Activated naive CD4-positive, alpha-beta T cell treated with anti-CD3 and anti-CD28 coated beads for 36 hours (primary cell): ENCODE measurements at regions of chr12 and their contacts with region 1.

Region 1: DNA sequence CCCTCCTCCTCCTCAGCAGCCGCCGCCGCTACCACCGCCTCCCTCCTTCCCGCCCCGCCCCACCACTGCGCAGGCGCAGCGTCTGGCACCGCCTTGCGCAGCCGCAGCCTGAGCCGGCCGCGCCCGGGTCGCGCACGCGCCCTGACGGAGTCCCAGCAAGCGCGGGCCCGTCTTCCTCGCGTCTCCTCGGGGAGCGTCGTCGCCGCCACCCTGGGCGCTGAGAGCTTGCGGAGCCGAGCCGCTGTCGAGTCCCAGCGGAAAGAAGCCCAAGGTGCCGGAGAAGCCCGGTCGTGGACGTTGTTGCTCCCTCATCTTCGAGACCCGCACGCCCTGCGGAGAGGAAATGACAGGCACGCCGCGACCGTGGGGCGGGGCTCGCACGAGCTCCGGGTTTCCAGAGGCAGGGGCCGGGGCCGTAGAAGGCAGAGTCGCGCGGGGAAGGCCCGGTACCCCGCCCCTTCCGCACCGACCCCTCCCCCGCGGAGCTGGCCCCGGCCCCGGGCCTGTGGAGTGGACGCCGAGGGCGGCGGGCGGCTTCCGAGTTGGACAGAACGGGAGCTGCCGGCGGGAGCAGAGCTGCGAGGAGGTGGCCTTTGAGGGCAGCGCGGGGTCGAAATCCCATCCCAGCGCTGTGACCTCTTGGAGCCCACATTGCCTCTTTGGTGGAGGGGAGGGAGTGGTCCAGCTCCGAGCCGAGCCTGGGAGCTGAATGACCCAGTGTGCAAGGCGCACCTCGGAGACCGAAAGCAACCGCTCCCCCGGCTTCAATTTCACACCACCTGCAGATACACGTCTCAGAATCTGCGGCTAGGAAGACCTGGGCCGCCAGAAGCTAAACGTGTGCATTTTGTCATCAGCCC is 469 bp upstream of the RAB35 start:
- DNase-seq: peak; percentile 98
- H3K4me3 Mint-ChIP-seq: peak overlapping the region; percentile 81
- H3K27ac Mint-ChIP-seq: peak overlapping the region; percentile 85
- H3K4me1 Mint-ChIP-seq: peaks cover 72% of the 10 kb centered on the region
- H3K27me3 Mint-ChIP-seq: no peaks in the 10 kb centered on the region

Region 2: GRCh38 chr12:119673634-119674033 is 443.4 kb before region 1 on chr12:
- CTCF ChIA-PET with region 1: no interaction called
- intact Hi-C with region 1: loop called (anchors 2 kb)
- DNase-seq: peak; percentile 45
- H3K4me3 Mint-ChIP-seq: no peak overlapping the region
- H3K27ac Mint-ChIP-seq: peak overlapping the region; percentile 93
- H3K4me1 Mint-ChIP-seq: peaks cover 47% of the 10 kb centered on the region
- H3K27me3 Mint-ChIP-seq: no peaks in the 10 kb centered on the region

Region 3: DNA sequence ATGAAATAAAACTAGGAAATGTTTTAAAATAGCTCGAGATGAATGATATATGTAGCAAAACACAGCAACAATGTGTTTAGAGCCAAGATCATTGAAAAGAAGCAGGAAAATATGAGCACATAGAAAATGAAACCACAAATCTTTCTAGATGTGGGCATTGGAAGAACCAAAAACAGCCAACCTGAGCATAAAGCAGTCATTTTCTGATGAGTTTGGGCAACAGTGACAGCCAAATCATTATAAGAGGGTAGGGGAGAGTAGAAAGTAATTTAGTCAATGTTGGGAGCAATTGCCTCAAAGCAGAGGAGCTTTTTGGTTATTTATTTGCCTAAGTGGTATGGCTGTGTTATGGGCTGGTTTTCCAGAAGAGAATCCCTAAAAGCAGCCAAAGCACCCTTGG is 136.8 kb before region 1 on chr12:
- CTCF ChIA-PET with region 1: no interaction called
- intact Hi-C with region 1: loop called (anchors 1 kb)
- DNase-seq: peak; percentile 43
- H3K4me3 Mint-ChIP-seq: peak overlapping the region; percentile 54
- H3K27ac Mint-ChIP-seq: peak overlapping the region; percentile 84
- H3K4me1 Mint-ChIP-seq: peaks cover 17% of the 10 kb centered on the region
- H3K27me3 Mint-ChIP-seq: no peaks in the 10 kb centered on the region

Region 4: DNA sequence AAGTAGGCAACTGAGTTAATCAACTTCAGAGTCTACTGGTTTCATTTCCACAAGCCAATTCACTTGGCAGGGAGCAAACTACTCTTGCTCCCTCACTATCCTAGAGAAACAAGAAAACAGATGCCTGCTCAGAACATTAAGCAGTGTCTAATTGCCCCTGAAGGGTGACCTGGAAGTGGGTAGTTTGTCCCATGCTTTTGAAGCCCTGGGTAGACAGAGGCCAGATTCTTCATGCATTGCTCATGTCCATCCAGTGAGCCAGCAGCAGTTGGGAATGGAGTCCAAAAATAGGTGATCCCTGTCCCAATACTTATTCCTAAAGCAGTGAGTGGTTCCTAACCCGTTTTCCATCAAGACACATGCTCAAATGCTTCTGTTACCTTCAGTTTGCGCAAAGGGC is 79.2 kb before region 1 on chr12:
- CTCF ChIA-PET with region 1: no interaction called
- intact Hi-C with region 1: no loop called
- DNase-seq: no peak
- H3K4me3 Mint-ChIP-seq: no peak overlapping the region
- H3K27ac Mint-ChIP-seq: no peak overlapping the region
- H3K4me1 Mint-ChIP-seq: peaks cover 32% of the 10 kb centered on the region
- H3K27me3 Mint-ChIP-seq: no peaks in the 10 kb centered on the region

Region 5: GRCh38 chr12:120086801-120087621 is 30.0 kb before region 1 on chr12:
- CTCF ChIA-PET with region 1: interaction called, 4 read pairs
- intact Hi-C with region 1: loop called (anchors 1 kb)
- DNase-seq: peak; percentile 100
- H3K4me3 Mint-ChIP-seq: peak overlapping the region; percentile 63
- H3K27ac Mint-ChIP-seq: peak overlapping the region; percentile 85
- H3K4me1 Mint-ChIP-seq: peaks cover 41% of the 10 kb centered on the region
- H3K27me3 Mint-ChIP-seq: no peaks in the 10 kb centered on the region

Region 6: DNA sequence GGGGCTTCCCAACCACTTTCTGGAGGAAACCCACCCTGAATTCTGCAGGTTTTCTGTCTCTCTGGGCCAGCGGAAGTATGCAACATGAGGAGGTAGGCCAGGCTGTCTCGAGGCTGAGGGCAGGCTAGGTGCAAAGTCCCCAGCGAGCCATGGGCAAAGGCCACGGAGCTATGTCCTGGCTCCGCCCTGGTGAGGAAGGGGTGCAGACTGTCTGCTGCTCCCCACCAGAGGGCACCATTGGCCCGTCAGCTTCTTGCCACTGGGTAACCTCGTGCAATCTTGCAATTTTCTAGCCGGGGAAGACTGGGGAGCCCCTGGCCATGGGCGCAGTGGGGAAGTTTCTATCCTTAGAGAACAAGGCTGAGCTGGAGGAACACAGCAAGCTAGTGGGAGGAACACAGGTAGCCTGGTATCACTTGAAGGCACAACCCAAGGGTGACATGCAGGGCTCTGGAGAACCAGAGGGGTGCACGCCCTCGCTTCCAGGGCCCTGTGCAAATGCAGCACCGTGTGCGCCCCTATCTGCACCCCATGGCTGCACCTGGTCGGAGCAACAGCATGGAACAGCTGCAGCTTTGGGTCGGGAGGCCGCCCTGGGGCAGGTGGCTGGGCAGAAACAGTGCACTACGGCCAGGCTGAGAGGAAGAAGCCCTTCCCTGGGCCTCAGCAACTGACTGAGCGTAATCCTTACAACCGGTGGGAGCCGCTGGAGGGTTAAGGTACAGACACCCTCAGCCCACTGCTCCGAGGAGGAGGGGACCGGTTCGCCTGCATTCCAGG is 111.5 kb after region 1 on chr12:
- CTCF ChIA-PET with region 1: no interaction called
- intact Hi-C with region 1: loop called (anchors 1 kb)
- DNase-seq: peak; percentile 96
- H3K4me3 Mint-ChIP-seq: peak overlapping the region; percentile 49
- H3K27ac Mint-ChIP-seq: peak overlapping the region; percentile 84
- H3K4me1 Mint-ChIP-seq: peaks cover 88% of the 10 kb centered on the region
- H3K27me3 Mint-ChIP-seq: no peaks in the 10 kb centered on the region

Region 7: DNA sequence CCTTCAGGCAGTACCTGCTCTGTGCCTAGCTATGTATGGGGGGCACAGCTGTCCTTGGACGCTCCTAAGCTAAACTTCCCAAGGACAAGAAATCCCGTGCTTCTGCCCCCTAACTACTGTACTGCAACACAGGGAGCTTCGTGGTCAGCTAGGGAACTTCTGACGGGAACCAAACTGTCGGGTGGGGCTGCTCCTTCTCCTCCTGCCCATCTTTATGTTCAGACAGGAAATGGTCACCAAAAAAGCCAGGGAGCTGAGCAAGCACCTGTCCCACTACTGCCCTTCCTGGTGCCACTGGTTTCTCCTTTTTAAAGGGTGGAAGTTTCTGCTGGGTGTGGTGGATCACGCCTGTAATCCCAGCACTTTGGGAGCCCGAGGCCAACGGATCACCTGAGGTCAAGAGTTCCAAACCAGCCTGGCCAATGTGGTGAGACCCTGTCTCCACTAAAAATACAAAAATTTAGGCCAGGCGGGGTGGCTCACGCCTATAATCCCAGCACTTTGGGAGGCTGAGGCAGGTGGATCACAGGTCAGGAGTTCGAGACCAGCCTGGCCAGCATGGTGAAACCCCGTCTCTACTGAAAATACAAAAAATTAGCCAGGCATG is 121.9 kb after region 1 on chr12:
- CTCF ChIA-PET with region 1: no interaction called
- intact Hi-C with region 1: no loop called
- DNase-seq: no peak
- H3K4me3 Mint-ChIP-seq: no peak overlapping the region
- H3K27ac Mint-ChIP-seq: peak overlapping the region; percentile 24
- H3K4me1 Mint-ChIP-seq: peaks cover 86% of the 10 kb centered on the region
- H3K27me3 Mint-ChIP-seq: no peaks in the 10 kb centered on the region

Region 8: GRCh38 chr12:120292661-120293531 is 175.9 kb after region 1 on chr12 and contains the start of gene RNU4-1:
- CTCF ChIA-PET with region 1: no interaction called
- intact Hi-C with region 1: loop called (anchors 2 kb)
- DNase-seq: peak; percentile 88
- H3K4me3 Mint-ChIP-seq: no peak within 1 kb of the TSS
- H3K27ac Mint-ChIP-seq: no peak within 1 kb of the TSS
- H3K4me1 Mint-ChIP-seq: peaks cover 6% of the 10 kb centered on the region
- H3K27me3 Mint-ChIP-seq: no peaks in the 10 kb centered on the region
- total RNA-seq, gene RNU4-1: 685 to 1,294 TPM

Region 9: GRCh38 chr12:120534203-120534702 is 417.2 kb after region 1 on chr12 and contains the start of gene RNF10:
- CTCF ChIA-PET with region 1: no interaction called
- intact Hi-C with region 1: loop called (anchors 5 kb)
- DNase-seq: peak; percentile 78
- H3K4me3 Mint-ChIP-seq: peak within 1 kb of the TSS; percentile 92
- H3K27ac Mint-ChIP-seq: peak within 1 kb of the TSS; percentile 94
- H3K4me1 Mint-ChIP-seq: peaks cover 47% of the 10 kb centered on the region
- H3K27me3 Mint-ChIP-seq: no peaks in the 10 kb centered on the region
- total RNA-seq, gene RNF10: 159 to 166 TPM